ENCODE measurements at regions of chr5 and their contacts with region 1.

Region 1: GRCh38 chr5:52948418-52949076 is 40.6 kb upstream of the ITGA2 start:
- DNase-seq: peak; percentile 88
- H3K4me3 Mint-ChIP-seq: no peak overlapping the region
- H3K27ac Mint-ChIP-seq: no peak overlapping the region
- H3K4me1 Mint-ChIP-seq: peaks cover 22% of the 10 kb centered on the region
- H3K27me3 Mint-ChIP-seq: no peaks in the 10 kb centered on the region
- CTCF ChIP-seq: peak; percentile 87

Region 2: GRCh38 chr5:52757991-52758390 is 190.6 kb before region 1 on chr5:
- CTCF ChIA-PET with region 1: no interaction called
- POLR2A ChIA-PET with region 1: no interaction called
- intact Hi-C with region 1: no loop called
- DNase-seq: peak; percentile 66
- H3K4me3 Mint-ChIP-seq: no peak overlapping the region
- H3K27ac Mint-ChIP-seq: no peak overlapping the region
- H3K4me1 Mint-ChIP-seq: no peaks in the 10 kb centered on the region
- H3K27me3 Mint-ChIP-seq: no peaks in the 10 kb centered on the region
- CTCF ChIP-seq: no peak

Region 3: DNA sequence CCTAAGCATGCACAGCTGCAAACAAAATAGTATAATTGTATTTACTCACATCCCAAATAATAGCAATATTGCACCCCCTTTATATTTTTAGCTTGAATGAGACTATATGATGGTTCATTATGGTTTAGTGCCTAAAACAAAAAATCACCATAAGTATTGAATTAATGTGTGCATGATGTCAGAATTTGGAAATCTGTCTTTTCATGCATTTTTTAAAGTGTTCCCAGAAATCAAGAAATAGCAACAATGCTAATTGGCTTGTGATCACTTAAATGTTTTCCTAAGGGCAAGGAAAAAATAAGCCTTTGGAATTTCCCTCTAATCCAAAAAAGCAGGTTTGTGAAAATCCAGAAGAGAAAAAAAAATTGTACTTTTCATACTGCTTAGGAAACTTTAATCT is 10.3 kb before region 1 on chr5:
- CTCF ChIA-PET with region 1: interaction called, 16 read pairs
- POLR2A ChIA-PET with region 1: no interaction called
- intact Hi-C with region 1: no loop called
- DNase-seq: no peak
- H3K4me3 Mint-ChIP-seq: no peak overlapping the region
- H3K27ac Mint-ChIP-seq: no peak overlapping the region
- H3K4me1 Mint-ChIP-seq: no peaks in the 10 kb centered on the region
- H3K27me3 Mint-ChIP-seq: no peaks in the 10 kb centered on the region
- CTCF ChIP-seq: no peak

Region 4: GRCh38 chr5:52989781-52990527 is 41.4 kb after region 1 on chr5:
- CTCF ChIA-PET with region 1: interaction called, 127 read pairs
- POLR2A ChIA-PET with region 1: interaction called, 102 read pairs
- intact Hi-C with region 1: loop called (anchors 1 kb)
- DNase-seq: peak; percentile 56
- H3K4me3 Mint-ChIP-seq: peak overlapping the region; percentile 77
- H3K27ac Mint-ChIP-seq: peak overlapping the region; percentile 25
- H3K4me1 Mint-ChIP-seq: peaks cover 48% of the 10 kb centered on the region
- H3K27me3 Mint-ChIP-seq: no peaks in the 10 kb centered on the region
- CTCF ChIP-seq: peak; percentile 42

Region 5: GRCh38 chr5:53035868-53036381 is 87.4 kb after region 1 on chr5:
- CTCF ChIA-PET with region 1: interaction called, 49 read pairs
- POLR2A ChIA-PET with region 1: interaction called, 7 read pairs
- intact Hi-C with region 1: no loop called
- DNase-seq: peak; percentile 64
- H3K4me3 Mint-ChIP-seq: no peak overlapping the region
- H3K27ac Mint-ChIP-seq: peak overlapping the region; percentile 76
- H3K4me1 Mint-ChIP-seq: peaks cover 43% of the 10 kb centered on the region
- H3K27me3 Mint-ChIP-seq: no peaks in the 10 kb centered on the region
- CTCF ChIP-seq: peak; percentile 23

Region 6: GRCh38 chr5:53069626-53070025 is 121.1 kb after region 1 on chr5:
- CTCF ChIA-PET with region 1: interaction called, 39 read pairs
- POLR2A ChIA-PET with region 1: no interaction called
- intact Hi-C with region 1: no loop called
- DNase-seq: peak; percentile 71
- H3K4me3 Mint-ChIP-seq: no peak overlapping the region
- H3K27ac Mint-ChIP-seq: no peak overlapping the region
- H3K4me1 Mint-ChIP-seq: peaks cover 7% of the 10 kb centered on the region
- H3K27me3 Mint-ChIP-seq: no peaks in the 10 kb centered on the region
- CTCF ChIP-seq: no peak

Region 7: GRCh38 chr5:53109443-53110127 is 161.0 kb after region 1 on chr5 and contains the start of gene MOCS2:
- CTCF ChIA-PET with region 1: interaction called, 39 read pairs
- POLR2A ChIA-PET with region 1: interaction called, 10 read pairs
- intact Hi-C with region 1: no loop called
- DNase-seq: peak; percentile 89
- H3K4me3 Mint-ChIP-seq: peak within 1 kb of the TSS; percentile 97
- H3K27ac Mint-ChIP-seq: peak within 1 kb of the TSS; percentile 80
- H3K4me1 Mint-ChIP-seq: peaks cover 18% of the 10 kb centered on the region
- H3K27me3 Mint-ChIP-seq: no peaks in the 10 kb centered on the region
- CTCF ChIP-seq: no peak
- total RNA-seq, gene MOCS2: 31.4 and 43.0 TPM in 2 replicates

Measured in MCF 10A (cell line).